Thyroid gland (tissue), 4 donors: ENCODE measurements at regions of chr6 and their contacts with region 1.

Region 1: GRCh38 chr6:29752451-29753308 is 29.4 kb downstream of the HLA-F start:
- DNase-seq: peak; percentile 85 to 89
- H3K4me3 ChIP-seq: peak overlapping the region; percentile 58 to 65 (median 62)
- H3K27ac ChIP-seq: peak overlapping the region; percentile 66 to 92 (median 92)
- H3K4me1 ChIP-seq: peaks cover 16 to 19% of the 10 kb centered on the region in 2 donors
- H3K27me3 ChIP-seq: no peaks in the 10 kb centered on the region
- CTCF ChIP-seq: peak; percentile 69 to 99 (median 96)
- POLR2A ChIP-seq: peak in 1 of 2 donors; percentile 56

Region 2: DNA sequence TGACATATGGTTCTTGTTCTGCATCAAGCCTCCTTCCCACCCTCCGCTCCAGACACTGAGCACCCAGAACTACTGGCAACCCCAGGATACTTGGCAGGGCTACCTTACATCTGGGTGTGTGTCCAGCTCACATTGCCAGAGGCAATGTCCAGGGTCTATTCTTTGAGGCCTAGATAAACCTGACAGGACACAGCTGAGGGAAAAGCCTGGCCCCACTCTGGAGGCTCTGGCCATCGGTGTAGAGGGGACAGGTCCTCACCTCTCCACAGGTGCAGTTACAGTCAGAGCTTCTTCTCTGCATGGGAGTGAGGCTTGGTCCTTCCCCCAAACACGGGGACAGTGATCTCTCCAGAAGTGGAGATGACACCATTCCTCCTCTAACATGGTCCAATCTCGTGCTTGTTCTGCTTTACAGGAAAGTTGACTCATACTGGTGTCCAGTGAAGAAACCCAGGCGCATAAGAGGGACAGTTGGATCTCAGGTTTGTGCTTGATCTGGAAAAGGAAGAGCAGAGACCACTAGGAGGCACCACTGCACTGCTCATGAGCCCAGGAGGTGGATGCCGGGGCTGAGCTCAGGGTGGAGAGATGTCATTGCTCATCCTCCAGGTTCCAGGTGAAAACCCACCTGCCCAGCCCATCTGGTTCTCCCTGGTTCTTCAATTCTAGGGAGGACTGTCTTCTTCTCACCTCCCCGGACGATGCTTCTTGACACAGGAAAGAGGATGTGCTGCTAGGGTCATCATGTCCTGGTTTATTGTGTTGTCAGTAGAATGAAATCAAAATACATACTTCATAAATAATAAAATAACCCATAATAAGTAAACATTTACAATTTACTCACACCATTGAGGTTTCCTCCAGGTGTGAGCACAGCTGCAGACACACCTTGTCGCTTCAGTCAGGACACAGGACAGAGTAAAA is 14.7 kb before region 1 on chr6:
- intact Hi-C with region 1: loop called (anchors 2 kb)
- DNase-seq: peak; percentile 62 to 64
- H3K4me3 ChIP-seq: no peak overlapping the region
- H3K27ac ChIP-seq: no peak overlapping the region
- H3K4me1 ChIP-seq: no peaks in the 10 kb centered on the region
- H3K27me3 ChIP-seq: no peaks in the 10 kb centered on the region
- CTCF ChIP-seq: peak; percentile 25 to 73 (median 62)
- POLR2A ChIP-seq: no peak